Cardiac septum (tissue), 1 donor: ENCODE measurements at regions of chr2 and their contacts with region 1.

Region 1: GRCh38 chr2:68751397-68752339 is 17.1 kb downstream of the ARHGAP25 start:
- DNase-seq: peak; percentile 96

Region 2: GRCh38 chr2:68537809-68538208 is 213.9 kb before region 1 on chr2:
- intact Hi-C with region 1: no loop called
- DNase-seq: no peak

Region 3: GRCh38 chr2:68837164-68837860 is 85.6 kb after region 1 on chr2:
- intact Hi-C with region 1: loop called (anchors 2 kb)
- DNase-seq: peak; percentile 87